Heart right ventricle (tissue), 16 donors: ENCODE measurements at regions of chr10 and their contacts with region 1.

Region 1: DNA sequence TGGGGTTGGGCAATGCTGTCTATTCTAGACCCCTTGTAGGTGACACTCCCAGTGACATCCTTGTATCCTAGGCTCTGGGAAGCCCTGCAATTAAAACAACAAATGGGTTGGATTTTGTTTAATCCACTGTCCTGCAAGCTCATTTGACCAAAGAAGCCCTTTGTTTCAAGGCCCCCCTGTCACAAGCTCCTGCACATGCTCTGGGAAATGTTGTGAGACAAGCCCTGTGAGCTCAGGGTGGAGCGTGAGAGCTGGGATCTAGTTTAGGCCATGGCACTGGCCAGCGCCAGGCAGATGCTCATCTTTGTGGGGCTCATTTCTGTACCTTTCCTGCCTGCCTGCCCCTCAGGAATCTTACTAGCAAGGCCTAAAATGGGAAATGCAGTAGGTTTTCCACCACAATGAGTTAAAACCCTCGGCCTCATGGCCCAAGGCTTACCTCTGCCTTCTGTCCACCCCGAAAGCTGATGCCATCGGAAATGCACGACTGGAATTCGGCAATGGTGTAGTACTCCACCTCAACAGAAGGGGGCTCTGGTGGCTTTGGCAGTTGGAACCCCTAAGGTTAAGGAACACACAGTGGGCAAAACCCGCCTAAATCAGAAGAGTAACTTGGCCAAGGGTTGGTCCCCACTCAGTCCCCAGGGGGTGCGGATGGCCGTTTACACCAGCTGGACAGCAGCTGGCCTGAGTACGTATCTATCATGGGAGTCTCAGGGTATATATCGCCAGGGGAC is 112.0 kb downstream of the NEURL1 start:
- DNase-seq: peak in 1 of 2 donors; percentile 66
- ATAC-seq: peak; percentile 27 to 63 (median 50)
- H3K4me3 ChIP-seq: no peak overlapping the region
- H3K27ac ChIP-seq: no peak overlapping the region
- H3K4me1 ChIP-seq: peaks cover 0 to 16% (median 0%) of the 10 kb centered on the region in 9 donors
- H3K27me3 ChIP-seq: no peaks in the 10 kb centered on the region
- CTCF ChIP-seq: peak; percentile 75 to 84 (median 81)

Region 2: DNA sequence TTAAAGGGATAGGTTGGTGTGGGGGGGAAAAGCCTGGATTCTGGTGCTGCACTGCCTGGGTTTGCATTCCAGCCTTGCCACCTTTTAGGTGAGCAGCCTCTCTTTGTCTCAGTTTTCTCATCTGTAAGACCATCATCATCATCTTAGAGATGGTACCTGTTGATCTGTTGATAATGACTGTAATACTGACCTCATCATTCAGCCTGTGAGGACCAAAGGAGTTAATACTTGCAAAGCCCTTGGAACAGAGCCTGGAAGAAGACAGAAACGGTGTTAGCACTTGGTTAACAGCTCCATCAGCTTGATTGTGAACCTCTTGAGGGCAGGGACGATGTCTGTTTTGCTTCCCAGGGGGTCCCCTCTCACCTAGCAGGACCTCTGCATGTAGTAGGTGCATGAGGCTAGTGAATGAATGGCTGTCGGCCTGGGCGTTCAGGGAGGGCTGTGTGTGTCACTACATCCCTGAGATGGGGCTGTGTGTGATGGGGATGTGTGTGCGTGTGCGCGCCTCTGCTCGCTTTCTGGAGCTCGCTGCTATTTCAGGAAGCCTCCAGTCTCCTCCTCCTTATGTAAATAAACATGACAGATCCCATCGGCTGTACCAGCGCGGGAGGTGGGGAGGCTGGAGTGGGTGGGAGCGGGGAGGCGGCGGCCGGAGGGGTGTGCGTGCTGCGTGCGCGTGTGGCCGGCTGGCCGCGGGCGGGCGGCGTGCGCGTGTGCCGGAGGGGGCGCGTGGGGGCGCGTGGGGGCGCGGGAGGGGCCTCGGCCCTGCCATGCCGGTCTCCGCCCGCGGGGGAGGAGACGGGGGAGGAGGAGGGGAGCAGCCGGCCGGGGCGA is 50.8 kb before region 1 on chr10:
- intact Hi-C with region 1: loop called in 1 of 10 experiments (anchors 5 kb)
- DNase-seq: peak; percentile 33 to 41
- ATAC-seq: peak; percentile 47 to 79 (median 68)
- H3K4me3 ChIP-seq: peak overlapping the region in 9 of 10 donors; percentile 25 to 56 (median 49)
- H3K27ac ChIP-seq: no peak overlapping the region
- H3K4me1 ChIP-seq: peaks cover 0 to 21% (median 9%) of the 10 kb centered on the region in 9 donors
- H3K27me3 ChIP-seq: peaks cover 0 to 27% (median 9%) of the 10 kb centered on the region in 7 donors
- CTCF ChIP-seq: no peak

Region 3: DNA sequence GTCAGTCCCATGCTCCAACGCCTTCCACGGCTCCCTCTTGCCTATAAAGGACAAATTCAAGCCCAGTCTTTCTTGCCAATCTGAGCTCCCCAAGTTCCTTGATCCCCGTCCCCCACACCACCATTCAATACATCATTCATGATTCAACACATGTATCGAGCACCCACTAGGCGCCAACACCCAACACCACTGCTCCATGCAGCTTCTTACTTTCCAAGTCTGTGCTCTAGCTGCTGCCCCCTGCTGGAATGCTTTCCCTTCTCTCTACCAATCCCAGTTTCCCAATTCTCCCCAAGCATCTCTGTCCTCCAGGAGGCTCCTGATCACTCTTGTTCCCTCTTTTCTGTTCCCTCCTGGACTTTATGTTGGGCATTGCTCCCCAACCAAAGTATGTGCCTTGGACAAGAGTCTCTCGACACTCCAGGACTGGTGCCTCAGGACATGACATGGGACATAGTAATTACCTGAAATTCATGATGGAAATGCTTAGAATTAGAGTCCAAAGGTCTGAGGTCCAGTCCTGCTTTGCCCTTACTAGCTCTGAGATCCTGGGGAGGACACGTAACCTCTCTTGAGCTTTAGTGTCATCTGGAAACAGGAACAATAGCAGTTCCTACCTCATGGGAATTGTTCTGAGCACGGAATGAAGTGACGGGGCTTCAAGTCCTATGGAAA is 60.7 kb after region 1 on chr10:
- intact Hi-C with region 1: loop called in 5 of 10 experiments (anchors 5 to 10 kb)
- DNase-seq: no peak
- ATAC-seq: no peak
- H3K4me3 ChIP-seq: no peak overlapping the region
- H3K27ac ChIP-seq: peak overlapping the region in 9 of 10 donors; percentile 23 to 83 (median 72)
- H3K4me1 ChIP-seq: peaks cover 26 to 90% (median 70%) of the 10 kb centered on the region in 9 donors
- H3K27me3 ChIP-seq: no peaks in the 10 kb centered on the region
- CTCF ChIP-seq: peak in 8 of 9 donors; percentile 11 to 54 (median 46)

Region 4: DNA sequence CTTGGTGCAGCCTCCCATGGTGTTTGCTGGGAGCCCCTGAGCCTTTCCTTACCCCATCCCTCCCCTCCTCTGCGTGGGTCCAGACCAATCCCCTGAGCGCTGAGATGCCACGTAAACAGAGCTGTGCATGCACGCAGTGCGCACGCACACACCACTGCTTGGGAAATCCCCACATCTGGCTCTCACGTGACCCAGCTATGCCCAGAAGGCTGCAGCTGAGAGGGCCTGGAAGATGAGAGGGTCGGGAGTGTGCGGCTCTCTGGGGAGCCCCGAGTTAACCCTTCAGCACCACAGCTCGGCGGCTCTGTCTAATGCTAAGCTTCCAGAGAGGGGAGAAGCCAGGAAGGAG is 72.6 kb after region 1 on chr10:
- intact Hi-C with region 1: loop called in 1 of 10 experiments (anchors 5 kb)
- DNase-seq: peak; percentile 83 to 89
- ATAC-seq: peak; percentile 81 to 93 (median 88)
- H3K4me3 ChIP-seq: peak overlapping the region in 8 of 10 donors; percentile 11 to 46 (median 35)
- H3K27ac ChIP-seq: peak overlapping the region in 9 of 10 donors; percentile 57 to 90 (median 82)
- H3K4me1 ChIP-seq: peaks cover 0 to 50% (median 28%) of the 10 kb centered on the region in 9 donors
- H3K27me3 ChIP-seq: no peaks in the 10 kb centered on the region
- CTCF ChIP-seq: no peak

Region 5: GRCh38 chr10:103685880-103686669 is 80.5 kb after region 1 on chr10:
- intact Hi-C with region 1: loop called in 3 of 10 experiments (anchors 1 to 5 kb)
- DNase-seq: peak; percentile 69 to 78
- ATAC-seq: peak; percentile 69 to 87 (median 82)
- H3K4me3 ChIP-seq: no peak overlapping the region
- H3K27ac ChIP-seq: no peak overlapping the region
- H3K4me1 ChIP-seq: peaks cover 0 to 20% (median 5%) of the 10 kb centered on the region in 9 donors
- H3K27me3 ChIP-seq: no peaks in the 10 kb centered on the region
- CTCF ChIP-seq: peak; percentile 95 to 99 (median 96)